ENCODE measurements at regions of chr11 and their contacts with region 1.

Region 1: GRCh38 chr11:12963792-12964536 is 45.2 kb upstream of the RASSF10 start:
- DNase-seq: peak; percentile 21
- H3K4me3 Mint-ChIP-seq: no peak overlapping the region
- H3K27ac Mint-ChIP-seq: no peak overlapping the region
- H3K4me1 Mint-ChIP-seq: no peaks in the 10 kb centered on the region
- H3K27me3 Mint-ChIP-seq: peaks cover 15% of the 10 kb centered on the region

Region 2: DNA sequence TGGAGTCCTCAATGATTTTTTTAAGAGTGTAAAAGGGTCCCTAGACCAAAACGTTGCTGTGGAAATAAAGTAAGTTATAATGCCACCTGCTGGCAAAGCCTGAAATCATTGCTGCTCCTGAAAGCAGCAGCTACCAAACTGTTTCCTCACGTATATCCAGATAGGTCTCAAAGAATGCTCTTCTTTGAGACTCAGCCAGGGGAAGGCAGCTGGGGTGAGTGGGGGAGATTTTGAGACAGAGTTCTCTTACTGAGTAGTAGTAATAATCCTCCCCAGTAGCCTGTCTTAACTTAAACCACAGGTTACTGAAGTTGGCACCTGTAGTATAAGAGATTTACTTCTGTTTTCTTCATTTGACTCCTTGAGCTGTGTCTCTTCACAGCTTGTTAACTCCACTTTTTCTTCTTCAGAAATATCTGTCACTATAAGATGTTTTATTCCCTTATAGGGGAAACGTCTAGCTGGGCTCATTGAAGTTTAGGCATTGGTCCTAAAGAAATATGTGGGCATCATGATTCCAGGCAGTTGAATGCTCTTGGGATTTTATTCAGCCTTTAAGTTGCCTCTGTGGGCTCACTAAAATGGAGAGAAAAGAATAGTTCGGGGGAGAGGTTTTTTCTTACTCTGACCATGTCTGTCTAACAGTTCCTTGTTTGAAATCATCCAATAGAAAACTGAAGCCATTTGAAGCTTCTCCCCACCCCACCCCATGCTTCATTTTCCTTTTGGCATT is 421.1 kb after region 1 on chr11:
- intact Hi-C with region 1: loop called (anchors 1 kb)
- DNase-seq: no peak
- H3K4me3 Mint-ChIP-seq: no peak overlapping the region
- H3K27ac Mint-ChIP-seq: no peak overlapping the region
- H3K4me1 Mint-ChIP-seq: no peaks in the 10 kb centered on the region
- H3K27me3 Mint-ChIP-seq: no peaks in the 10 kb centered on the region